ENCODE measurements at regions of chr22 and their contacts with region 1.

Region 1: GRCh38 chr22:23970816-23971486 is 3.3 kb downstream of the DDT start:
- DNase-seq: no peak
- H3K4me3 ChIP-seq: no peak overlapping the region
- H3K27ac ChIP-seq: no peak overlapping the region
- H3K4me1 ChIP-seq: no peaks in the 10 kb centered on the region
- H3K27me3 ChIP-seq: no peaks in the 10 kb centered on the region
- CTCF ChIP-seq: no peak
- POLR2A ChIP-seq: no peak

Region 2: GRCh38 chr22:23622634-23623033 is 348.3 kb before region 1 on chr22:
- intact Hi-C with region 1: no loop called
- DNase-seq: no peak
- H3K4me3 ChIP-seq: no peak overlapping the region
- H3K27ac ChIP-seq: no peak overlapping the region
- H3K4me1 ChIP-seq: no peaks in the 10 kb centered on the region
- H3K27me3 ChIP-seq: no peaks in the 10 kb centered on the region
- CTCF ChIP-seq: no peak
- POLR2A ChIP-seq: no peak

Region 3: DNA sequence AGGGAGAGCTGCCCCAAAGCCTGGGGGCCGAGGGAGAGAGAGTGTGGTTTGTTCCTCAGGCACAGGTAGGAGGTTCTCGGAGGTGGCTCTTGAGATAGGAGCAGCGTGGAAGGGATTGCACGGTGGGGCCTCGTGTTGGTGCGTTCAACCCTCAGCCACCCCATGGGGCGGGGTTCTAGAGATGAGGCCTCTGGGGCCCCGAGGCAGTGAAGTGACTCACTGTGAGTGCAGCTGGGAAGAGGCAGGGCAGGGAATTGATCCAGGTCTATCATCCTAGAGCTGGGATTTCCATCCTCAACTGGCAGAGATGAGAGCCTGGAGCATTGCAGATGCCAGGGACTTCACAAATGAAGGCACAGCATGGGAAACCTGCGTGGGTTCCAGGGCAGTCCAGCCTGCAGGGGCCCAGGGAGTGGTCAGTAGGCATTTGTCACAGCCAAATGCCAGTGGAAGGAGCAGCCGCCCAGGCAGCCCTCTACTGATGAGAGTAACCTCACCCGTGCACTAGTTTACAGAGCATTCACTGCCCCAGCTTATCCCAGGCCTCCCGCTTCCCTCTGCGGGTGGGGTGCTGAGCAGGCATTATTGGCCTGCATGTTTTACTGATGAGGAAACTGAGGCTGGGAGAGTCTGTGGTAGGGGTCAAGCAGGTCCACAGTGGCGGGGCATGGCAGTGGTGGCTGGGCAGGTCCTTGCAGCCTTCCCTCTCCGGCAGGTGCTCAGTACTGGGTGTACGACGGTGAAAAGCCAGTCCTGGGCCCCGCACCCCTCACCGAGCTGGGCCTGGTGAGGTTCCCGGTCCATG is 189.2 kb before region 1 on chr22:
- intact Hi-C with region 1: no loop called
- DNase-seq: no peak
- H3K4me3 ChIP-seq: no peak overlapping the region
- H3K27ac ChIP-seq: no peak overlapping the region
- H3K4me1 ChIP-seq: peaks cover 5 to 6% of the 10 kb centered on the region in 2 donors
- H3K27me3 ChIP-seq: no peaks in the 10 kb centered on the region
- CTCF ChIP-seq: no peak
- POLR2A ChIP-seq: no peak

Region 4: DNA sequence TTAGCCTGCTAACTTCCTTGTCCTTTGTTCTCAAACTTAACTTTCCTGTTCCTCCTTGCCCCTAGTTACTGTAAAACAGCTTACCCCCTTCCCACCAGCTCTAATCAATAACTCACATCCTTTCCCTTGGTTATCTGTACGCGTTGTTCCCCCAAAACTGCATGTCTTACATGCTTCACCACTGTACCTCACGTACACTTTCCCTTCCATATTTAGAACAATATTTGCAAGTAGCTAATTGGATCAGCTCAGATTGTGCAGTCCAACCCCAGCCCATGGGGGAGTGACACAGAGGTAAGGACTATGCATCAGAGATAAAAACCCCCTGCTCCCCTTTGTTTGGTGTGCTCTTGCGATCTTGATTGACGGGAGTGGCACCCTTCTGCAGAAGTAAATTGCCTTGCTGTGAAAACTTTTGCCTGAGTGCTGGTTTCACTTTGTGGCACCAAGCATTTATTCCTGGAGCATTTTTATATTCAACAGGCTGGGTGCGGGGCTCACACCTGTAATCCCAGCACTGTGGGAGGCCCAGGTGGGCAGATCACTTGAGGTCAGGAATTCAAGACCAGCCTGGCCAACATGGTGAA is 45.8 kb before region 1 on chr22:
- intact Hi-C with region 1: loop called (anchors 5 kb)
- DNase-seq: no peak
- H3K4me3 ChIP-seq: no peak overlapping the region
- H3K27ac ChIP-seq: no peak overlapping the region
- H3K4me1 ChIP-seq: peaks cover 0 to 8% of the 10 kb centered on the region in 2 donors
- H3K27me3 ChIP-seq: no peaks in the 10 kb centered on the region
- CTCF ChIP-seq: no peak
- POLR2A ChIP-seq: no peak

Region 5: DNA sequence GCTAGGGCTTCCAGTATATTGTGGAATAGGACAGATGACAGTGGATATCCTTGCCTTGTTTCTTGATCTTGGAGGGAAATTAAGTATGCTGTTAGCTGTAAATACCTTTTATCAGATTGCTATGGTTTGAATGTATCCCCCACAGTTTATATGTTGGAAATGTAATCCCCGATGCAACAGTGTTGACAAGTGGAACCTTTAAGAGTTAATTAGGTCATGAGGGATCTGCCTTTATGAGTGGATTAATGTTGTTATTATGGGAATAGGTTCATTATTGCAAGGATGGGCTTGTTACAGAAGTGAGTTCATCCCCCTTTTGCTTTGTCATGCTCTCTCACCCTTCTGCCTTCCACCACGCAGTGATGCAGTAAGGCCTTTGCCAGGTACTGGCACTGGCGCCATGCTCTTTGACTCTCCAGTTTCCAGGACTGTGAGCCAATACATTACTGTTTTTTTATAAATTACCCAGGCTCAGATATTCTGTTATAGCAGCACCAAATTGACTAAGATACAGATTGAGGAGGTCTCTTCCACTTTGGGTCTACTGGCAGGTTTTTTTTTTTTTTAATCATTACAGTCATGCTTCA is 56.5 kb after region 1 on chr22:
- intact Hi-C with region 1: no loop called
- DNase-seq: peak; percentile 66 to 80
- H3K4me3 ChIP-seq: no peak overlapping the region
- H3K27ac ChIP-seq: peak overlapping the region; percentile 3 to 48 (median 38)
- H3K4me1 ChIP-seq: peaks cover 26 to 63% of the 10 kb centered on the region in 2 donors
- H3K27me3 ChIP-seq: no peaks in the 10 kb centered on the region
- CTCF ChIP-seq: no peak
- POLR2A ChIP-seq: no peak